HEK293 (cell line): ENCODE measurements at regions of chr2 and their contacts with region 1.

Region 1: GRCh38 chr2:11688222-11689069 is 18.5 kb upstream of the NTSR2 start:
- H3K4me3 ChIP-seq: no peak overlapping the region
- H3K27ac ChIP-seq: no peak overlapping the region
- H3K4me1 ChIP-seq: no peaks in the 10 kb centered on the region
- CTCF ChIP-seq: peak; percentile 70

Region 2: DNA sequence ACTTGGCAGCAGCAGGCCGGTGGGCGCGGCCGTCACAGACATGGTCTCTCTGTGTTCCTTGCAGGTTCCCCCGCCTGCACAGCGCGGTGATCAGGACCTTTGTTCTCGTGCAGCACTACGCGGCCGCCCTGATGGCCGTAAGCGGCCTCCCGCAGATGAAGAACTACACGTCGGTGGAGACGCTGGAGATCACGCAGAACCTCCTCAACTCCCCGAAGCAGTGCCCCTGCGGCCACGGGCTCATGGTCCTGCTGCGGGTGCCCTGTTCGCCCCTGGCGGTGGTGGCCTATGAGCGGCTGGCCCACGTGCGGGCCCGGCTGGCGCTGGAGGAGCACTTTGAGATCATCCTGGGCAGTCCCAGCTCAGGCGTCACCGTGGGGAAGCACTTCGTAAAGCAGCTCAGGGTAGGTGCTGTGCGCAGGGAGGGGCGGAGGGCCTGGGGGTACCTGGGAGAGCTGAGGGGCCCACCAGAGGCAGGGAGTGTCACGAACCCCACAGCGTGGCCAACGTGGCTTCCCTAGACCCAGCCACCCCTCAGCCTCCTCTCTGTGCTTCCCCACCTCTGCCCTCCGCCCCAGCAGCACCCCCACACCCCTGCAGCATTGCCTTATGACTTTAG is 77.7 kb before region 1 on chr2:
- CTCF ChIA-PET with region 1: no interaction called
- POLR2A ChIA-PET with region 1: no interaction called
- H3K4me3 ChIP-seq: no peak overlapping the region
- H3K27ac ChIP-seq: no peak overlapping the region
- H3K4me1 ChIP-seq: no peaks in the 10 kb centered on the region
- CTCF ChIP-seq: no peak

Region 3: GRCh38 chr2:11676640-11677039 is 11.8 kb before region 1 on chr2:
- CTCF ChIA-PET with region 1: interaction called, 14 read pairs
- POLR2A ChIA-PET with region 1: no interaction called
- H3K4me3 ChIP-seq: no peak overlapping the region
- H3K27ac ChIP-seq: no peak overlapping the region
- H3K4me1 ChIP-seq: no peaks in the 10 kb centered on the region
- CTCF ChIP-seq: no peak

Region 4: DNA sequence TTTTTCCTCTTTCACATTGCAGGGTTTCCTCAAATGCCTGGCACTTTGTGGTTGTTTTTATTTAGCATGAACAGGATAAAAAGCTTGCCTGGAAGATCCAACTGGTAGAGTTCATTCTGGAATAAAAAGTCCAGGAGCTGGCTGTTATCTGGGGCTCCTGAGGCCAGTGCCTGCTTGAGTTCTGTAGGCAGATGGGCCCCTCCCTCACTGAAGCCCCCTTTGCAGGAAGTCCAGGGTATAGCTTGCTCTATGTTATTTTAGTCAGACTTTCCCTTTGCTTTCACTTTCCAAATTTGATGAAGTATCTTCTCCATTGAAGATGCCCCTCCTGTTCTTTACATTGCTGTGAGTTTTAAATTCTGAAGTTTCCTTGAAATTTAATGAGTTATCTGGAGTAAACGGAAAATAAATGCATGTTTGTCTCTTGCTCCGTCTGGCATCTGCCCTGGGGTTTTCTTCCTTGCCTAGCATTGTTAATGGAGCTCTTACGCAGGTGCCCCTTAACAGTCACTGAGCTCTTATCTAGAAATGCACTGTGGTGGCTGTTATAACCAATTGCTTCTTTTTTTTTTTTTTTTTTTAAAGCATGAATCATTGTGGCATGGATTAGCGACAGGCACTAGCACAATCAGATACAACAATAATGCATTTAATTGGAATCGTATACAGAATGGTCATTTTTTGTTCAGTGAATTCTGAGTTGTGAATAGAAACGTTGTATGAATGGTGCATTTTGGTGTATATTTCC is 31.0 kb after region 1 on chr2:
- CTCF ChIA-PET with region 1: interaction called, 14 read pairs
- POLR2A ChIA-PET with region 1: no interaction called
- H3K4me3 ChIP-seq: peak overlapping the region; percentile 9; the same call in 1 of the 2 replicates
- H3K27ac ChIP-seq: no peak overlapping the region
- H3K4me1 ChIP-seq: peaks cover 6% of the 10 kb centered on the region; the same call in 1 of the 2 replicates
- CTCF ChIP-seq: no peak

Region 5: DNA sequence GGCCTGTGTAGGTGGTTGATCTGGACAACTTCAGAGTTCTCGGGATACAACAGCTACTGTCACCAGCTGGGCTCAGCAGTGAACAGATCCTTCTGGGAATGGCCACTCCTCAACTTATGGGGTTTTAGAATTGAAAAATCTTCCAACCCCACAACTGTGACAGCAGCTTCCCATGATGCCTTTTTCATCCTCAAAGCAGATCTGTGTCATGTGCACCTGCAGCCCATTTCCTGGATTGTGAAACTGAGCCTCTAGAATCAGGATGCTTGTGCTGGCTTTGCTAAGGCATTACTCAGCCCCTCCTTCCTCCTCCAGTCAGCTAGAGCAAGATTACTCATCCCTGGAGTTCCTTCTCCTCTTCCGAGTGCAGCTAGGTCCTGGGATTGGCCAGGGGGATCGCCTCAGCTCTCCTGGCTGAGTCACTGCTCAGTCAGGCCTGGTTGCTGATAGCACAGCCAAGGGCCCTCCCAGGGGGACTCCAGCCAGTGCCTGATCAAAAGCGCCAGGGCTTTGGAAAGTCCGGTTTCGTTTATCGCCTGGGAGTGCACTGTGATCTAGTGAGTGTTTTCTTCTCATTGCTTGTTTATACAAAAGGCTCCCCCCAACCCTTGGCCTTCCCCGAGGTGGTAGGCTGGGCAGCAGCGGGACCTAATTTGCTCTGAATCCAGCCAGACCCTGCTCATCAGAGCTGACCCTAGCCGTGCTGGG is 55.6 kb after region 1 on chr2:
- CTCF ChIA-PET with region 1: interaction called, 10 read pairs
- POLR2A ChIA-PET with region 1: interaction called, 4 read pairs
- H3K4me3 ChIP-seq: no peak overlapping the region
- H3K27ac ChIP-seq: peak overlapping the region; percentile 7; the same call in 1 of the 2 replicates
- H3K4me1 ChIP-seq: 0 out of 2 replicates have a peak, but pooled peaks cover 5% of the 10 kb centered on the region
- CTCF ChIP-seq: no peak